ENCODE measurements at regions of chr17 and their contacts with region 1.

Region 1: GRCh38 chr17:7862692-7863437 is 5.1 kb downstream of the CYB5D1 start:
- DNase-seq: peak; percentile 74
- ATAC-seq: no peak
- H3K4me3 ChIP-seq: no peak overlapping the region
- H3K4me3 Mint-ChIP-seq: no peak overlapping the region
- H3K27ac ChIP-seq: no peak overlapping the region
- H3K27ac Mint-ChIP-seq: peak overlapping the region; percentile 5
- H3K4me1 ChIP-seq: peaks cover 9 to 18% of the 10 kb centered on the region in 2 donors
- H3K4me1 Mint-ChIP-seq: peaks cover 9% of the 10 kb centered on the region
- H3K27me3 ChIP-seq: no peaks in the 10 kb centered on the region
- H3K27me3 Mint-ChIP-seq: no peaks in the 10 kb centered on the region
- CTCF ChIP-seq: peak; percentile 84

Region 2: DNA sequence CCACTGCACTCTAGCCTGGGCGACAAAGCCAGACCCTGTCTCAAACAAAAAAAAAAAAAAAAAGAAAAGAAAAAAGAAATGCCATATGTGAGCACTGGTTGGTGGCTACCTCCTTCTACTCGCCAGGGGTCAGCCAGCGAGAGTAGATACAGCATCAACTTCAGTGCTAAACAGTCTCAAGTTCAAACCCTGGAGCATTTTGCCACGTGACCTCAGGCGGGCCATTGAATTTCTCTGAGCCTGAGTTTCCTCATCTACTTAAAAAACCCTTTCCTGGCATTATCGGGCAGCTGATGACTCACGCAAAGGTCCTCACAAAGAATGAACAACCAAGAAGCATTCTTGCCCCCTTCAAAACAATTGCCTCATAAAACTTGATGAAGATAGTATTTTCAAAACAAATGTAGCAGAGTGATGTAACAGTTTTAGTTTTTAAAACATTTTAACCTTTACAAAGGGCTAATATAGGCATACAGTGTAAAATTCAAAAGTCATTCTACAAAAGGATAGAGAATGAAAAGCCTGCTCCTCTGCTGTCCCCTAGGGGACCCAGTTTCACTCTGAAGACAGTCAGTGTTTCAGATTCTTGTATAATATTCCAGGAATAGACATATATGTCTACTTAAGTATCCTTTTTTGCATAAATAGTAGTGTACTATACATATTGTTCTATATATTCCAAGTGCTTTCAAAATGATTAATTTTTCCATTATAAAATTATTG is 117.0 kb before region 1 on chr17:
- CTCF ChIA-PET with region 1: interaction called, 14 read pairs
- POLR2A ChIA-PET with region 1: no interaction called
- intact Hi-C with region 1: no loop called
- DNase-seq: no peak
- ATAC-seq: no peak
- H3K4me3 ChIP-seq: no peak overlapping the region
- H3K4me3 Mint-ChIP-seq: no peak overlapping the region
- H3K27ac ChIP-seq: no peak overlapping the region
- H3K27ac Mint-ChIP-seq: no peak overlapping the region
- H3K4me1 ChIP-seq: no peaks in the 10 kb centered on the region
- H3K4me1 Mint-ChIP-seq: no peaks in the 10 kb centered on the region
- H3K27me3 ChIP-seq: no peaks in the 10 kb centered on the region
- H3K27me3 Mint-ChIP-seq: peaks cover 25% of the 10 kb centered on the region
- CTCF ChIP-seq: no peak

Region 3: GRCh38 chr17:7897773-7898172 is 34.9 kb after region 1 on chr17:
- CTCF ChIA-PET with region 1: interaction called, 21 read pairs
- POLR2A ChIA-PET with region 1: no interaction called
- intact Hi-C with region 1: no loop called
- DNase-seq: peak; percentile 33
- ATAC-seq: peak; percentile 39
- H3K4me3 ChIP-seq: no peak overlapping the region
- H3K4me3 Mint-ChIP-seq: no peak overlapping the region
- H3K27ac ChIP-seq: no peak overlapping the region
- H3K27ac Mint-ChIP-seq: no peak overlapping the region
- H3K4me1 ChIP-seq: no peaks in the 10 kb centered on the region
- H3K4me1 Mint-ChIP-seq: no peaks in the 10 kb centered on the region
- H3K27me3 ChIP-seq: no peaks in the 10 kb centered on the region
- H3K27me3 Mint-ChIP-seq: no peaks in the 10 kb centered on the region
- CTCF ChIP-seq: no peak

Region 4: GRCh38 chr17:7915611-7916382 is 52.9 kb after region 1 on chr17 and contains the start of gene RNF227:
- CTCF ChIA-PET with region 1: interaction called, 17 read pairs
- POLR2A ChIA-PET with region 1: interaction called, 5 read pairs
- intact Hi-C with region 1: loop called (anchors 5 kb)
- DNase-seq: peak; percentile 93
- ATAC-seq: peak; percentile 82
- H3K4me3 ChIP-seq: peak within 1 kb of the TSS; percentile 9 to 81 (median 76)
- H3K4me3 Mint-ChIP-seq: peak within 1 kb of the TSS; percentile 93
- H3K27ac ChIP-seq: peak within 1 kb of the TSS; percentile 69 to 75
- H3K27ac Mint-ChIP-seq: peak within 1 kb of the TSS; percentile 93
- H3K4me1 ChIP-seq: peaks cover 16 to 20% of the 10 kb centered on the region in 2 donors
- H3K4me1 Mint-ChIP-seq: peaks cover 24% of the 10 kb centered on the region
- H3K27me3 ChIP-seq: no peaks in the 10 kb centered on the region
- H3K27me3 Mint-ChIP-seq: no peaks in the 10 kb centered on the region
- CTCF ChIP-seq: no peak
- total RNA-seq, gene RNF227: 3.8 and 4.3 TPM in 2 replicates

Region 5: GRCh38 chr17:7931709-7932482 is 69.0 kb after region 1 on chr17 and contains the starts of genes CNTROB and TRAPPC1:
- CTCF ChIA-PET with region 1: interaction called, 11 read pairs
- POLR2A ChIA-PET with region 1: interaction called, 4 read pairs
- intact Hi-C with region 1: no loop called
- DNase-seq: peak; percentile 100
- ATAC-seq: peak; percentile 98
- H3K4me3 ChIP-seq: peak within 1 kb of the TSS; percentile 75 to 98 (median 89)
- H3K4me3 Mint-ChIP-seq: peak within 1 kb of the TSS; percentile 95
- H3K27ac ChIP-seq: peak within 1 kb of the TSS; percentile 77 to 88
- H3K27ac Mint-ChIP-seq: peak within 1 kb of the TSS; percentile 95
- H3K4me1 ChIP-seq: peaks cover 18 to 33% of the 10 kb centered on the region in 2 donors
- H3K4me1 Mint-ChIP-seq: peaks cover 44% of the 10 kb centered on the region
- H3K27me3 ChIP-seq: no peaks in the 10 kb centered on the region
- H3K27me3 Mint-ChIP-seq: no peaks in the 10 kb centered on the region
- CTCF ChIP-seq: no peak
- total RNA-seq, gene CNTROB: 34.8 and 40.4 TPM in 2 replicates
- total RNA-seq, gene TRAPPC1: 86.0 and 118 TPM in 2 replicates

Region 6: DNA sequence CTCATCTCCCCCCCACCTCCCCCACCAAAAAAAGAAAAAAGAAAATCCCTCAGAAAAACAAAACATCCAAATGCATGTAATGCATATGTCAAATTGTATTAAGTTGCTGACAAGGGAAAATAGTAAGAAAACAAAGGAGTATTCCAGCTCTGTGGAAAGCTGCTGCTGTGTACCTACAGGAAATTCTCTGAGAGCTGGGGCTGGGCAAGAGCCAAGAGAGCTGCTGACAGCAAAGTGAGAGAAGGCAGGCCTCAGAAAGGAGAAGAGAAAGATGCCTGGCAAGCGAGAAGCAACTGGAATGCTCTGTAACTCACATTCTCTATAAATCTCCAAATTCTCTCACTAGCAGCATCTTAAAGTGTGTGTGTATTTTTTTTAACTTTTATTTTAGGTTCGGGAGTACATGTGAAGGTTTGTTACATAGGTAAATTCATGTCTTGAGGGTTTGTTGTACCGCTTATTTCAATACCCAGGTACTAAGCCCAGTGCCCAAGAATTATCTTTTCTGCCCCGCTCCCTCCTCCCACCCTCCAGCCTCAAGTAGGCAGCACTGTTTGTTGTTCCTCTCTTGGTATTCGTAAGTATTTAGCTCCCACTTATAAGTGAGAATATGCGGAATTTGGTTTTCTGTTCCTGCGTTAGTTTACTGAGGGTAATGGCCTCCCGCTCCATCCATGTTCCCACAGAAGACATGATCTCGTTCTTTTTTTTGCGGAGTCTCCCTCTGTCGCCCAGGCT is 93.5 kb after region 1 on chr17:
- CTCF ChIA-PET with region 1: no interaction called
- POLR2A ChIA-PET with region 1: no interaction called
- intact Hi-C with region 1: no loop called
- DNase-seq: no peak
- ATAC-seq: no peak
- H3K4me3 ChIP-seq: no peak overlapping the region
- H3K4me3 Mint-ChIP-seq: no peak overlapping the region
- H3K27ac ChIP-seq: no peak overlapping the region
- H3K27ac Mint-ChIP-seq: no peak overlapping the region
- H3K4me1 ChIP-seq: peaks cover 4 to 5% of the 10 kb centered on the region in 2 donors
- H3K4me1 Mint-ChIP-seq: peaks cover 5% of the 10 kb centered on the region
- H3K27me3 ChIP-seq: peaks cover 0 to 2% (median under 1%) of the 10 kb centered on the region in 4 experiments
- H3K27me3 Mint-ChIP-seq: peaks cover 12% of the 10 kb centered on the region
- CTCF ChIP-seq: no peak

Region 7: DNA sequence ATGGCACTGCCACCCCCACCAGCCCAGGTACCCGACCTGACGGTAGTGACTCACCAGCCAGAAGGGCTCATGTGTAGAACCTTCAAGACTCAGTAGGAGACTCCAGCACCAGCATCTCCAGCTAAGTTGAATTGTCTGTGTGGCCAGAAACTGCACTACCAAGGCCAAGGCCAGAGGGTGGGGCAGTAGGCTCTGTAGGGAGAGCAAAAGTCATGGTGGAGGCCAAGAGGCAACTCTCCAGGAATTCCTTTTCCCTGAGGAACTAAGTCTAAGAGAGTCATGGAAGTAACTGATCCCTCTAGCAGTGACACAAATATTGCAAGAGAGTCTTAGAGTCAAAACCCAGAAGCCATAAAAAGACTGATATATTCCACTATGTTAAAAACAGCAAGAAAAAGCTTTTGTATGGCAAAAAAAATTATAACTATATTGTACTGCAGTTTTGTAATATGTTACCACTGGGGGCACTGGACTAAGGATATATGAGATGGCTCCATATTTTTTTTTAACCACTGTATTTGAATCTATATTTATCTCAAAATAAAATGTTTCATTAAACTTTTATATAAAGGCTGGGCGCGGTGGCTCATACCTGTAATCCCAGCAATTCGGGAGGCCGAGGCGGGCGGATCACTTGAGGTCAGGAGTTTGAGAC is 109.4 kb after region 1 on chr17:
- CTCF ChIA-PET with region 1: no interaction called
- POLR2A ChIA-PET with region 1: no interaction called
- intact Hi-C with region 1: no loop called
- DNase-seq: no peak
- ATAC-seq: no peak
- H3K4me3 ChIP-seq: no peak overlapping the region
- H3K4me3 Mint-ChIP-seq: no peak overlapping the region
- H3K27ac ChIP-seq: no peak overlapping the region
- H3K27ac Mint-ChIP-seq: no peak overlapping the region
- H3K4me1 ChIP-seq: no peaks in the 10 kb centered on the region
- H3K4me1 Mint-ChIP-seq: no peaks in the 10 kb centered on the region
- H3K27me3 ChIP-seq: peaks cover 0 to 11% (median 0%) of the 10 kb centered on the region in 4 experiments
- H3K27me3 Mint-ChIP-seq: peaks cover 7% of the 10 kb centered on the region
- CTCF ChIP-seq: peak; percentile 21

Region 8: GRCh38 chr17:7982666-7983065 is 119.8 kb after region 1 on chr17:
- CTCF ChIA-PET with region 1: interaction called, 51 read pairs
- POLR2A ChIA-PET with region 1: no interaction called
- intact Hi-C with region 1: no loop called
- DNase-seq: no peak
- ATAC-seq: no peak
- H3K4me3 ChIP-seq: no peak overlapping the region
- H3K4me3 Mint-ChIP-seq: no peak overlapping the region
- H3K27ac ChIP-seq: no peak overlapping the region
- H3K27ac Mint-ChIP-seq: no peak overlapping the region
- H3K4me1 ChIP-seq: no peaks in the 10 kb centered on the region
- H3K4me1 Mint-ChIP-seq: no peaks in the 10 kb centered on the region
- H3K27me3 ChIP-seq: peaks cover 0 to 4% (median 0%) of the 10 kb centered on the region in 4 experiments
- H3K27me3 Mint-ChIP-seq: peaks cover 40% of the 10 kb centered on the region
- CTCF ChIP-seq: no peak

Measured in B cell (primary cell).